ENCODE measurements at regions of chr9 and their contacts with region 1.

Region 1: DNA sequence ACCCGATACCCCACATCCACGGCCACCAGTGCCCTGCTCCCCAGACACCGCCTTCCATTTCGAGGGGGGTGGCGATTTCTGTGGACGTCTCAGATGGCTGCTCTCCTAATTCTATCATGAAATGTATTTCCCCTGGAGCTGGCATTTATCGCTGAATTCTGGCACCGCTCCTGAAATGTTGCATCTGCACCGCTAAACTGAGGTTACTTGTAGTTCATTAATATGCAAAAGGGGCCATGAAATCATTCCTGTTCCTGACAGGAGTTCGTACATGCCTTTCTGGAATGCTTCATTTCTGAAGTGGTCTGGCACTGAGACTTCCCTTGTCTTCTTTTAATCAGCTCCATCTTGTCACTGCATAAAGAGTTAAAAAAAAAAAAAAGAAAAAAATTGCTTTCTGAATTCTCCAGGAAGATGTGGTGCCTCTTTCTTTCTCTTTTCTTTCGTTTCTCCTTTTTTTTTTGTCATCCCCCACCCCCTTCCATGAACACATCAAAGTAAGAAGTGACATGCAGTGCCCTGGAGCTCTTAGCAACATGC is 97.7 kb upstream of the SMARCA2 start:
- DNase-seq: no peak
- ATAC-seq: no peak
- H3K4me3 ChIP-seq: no peak overlapping the region
- H3K4me3 Mint-ChIP-seq: no peak overlapping the region
- H3K27ac ChIP-seq: no peak overlapping the region
- H3K27ac Mint-ChIP-seq: no peak overlapping the region
- H3K4me1 ChIP-seq: no peaks in the 10 kb centered on the region
- H3K4me1 Mint-ChIP-seq: no peaks in the 10 kb centered on the region
- H3K27me3 ChIP-seq: peaks cover 2 to 13% of the 10 kb centered on the region in 2 experiments
- H3K27me3 Mint-ChIP-seq: peaks cover 24 to 26% of the 10 kb centered on the region in 2 donors

Region 2: DNA sequence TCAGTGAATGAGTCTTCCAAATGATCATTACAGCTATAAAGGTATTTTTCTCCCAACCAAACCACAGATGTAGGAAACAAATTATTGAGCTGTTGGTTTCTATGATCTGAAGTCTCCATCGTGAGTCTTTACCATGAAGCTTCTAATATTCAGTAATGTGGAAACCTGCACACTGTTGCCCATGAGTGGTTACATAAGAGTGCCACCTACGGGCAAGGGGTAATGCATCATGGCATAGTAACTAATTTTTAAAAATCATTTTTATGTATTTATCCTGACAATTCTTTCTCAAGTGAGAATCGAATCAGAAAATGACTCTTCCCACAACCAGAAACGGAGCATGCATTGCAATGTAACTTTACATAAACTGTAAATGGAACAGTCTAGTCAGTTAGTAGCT is 184.8 kb before region 1 on chr9:
- CTCF ChIA-PET with region 1: no interaction called
- POLR2A ChIA-PET with region 1: no interaction called
- DNase-seq: no peak
- ATAC-seq: no peak
- H3K4me3 ChIP-seq: no peak overlapping the region
- H3K4me3 Mint-ChIP-seq: no peak overlapping the region
- H3K27ac ChIP-seq: no peak overlapping the region
- H3K27ac Mint-ChIP-seq: no peak overlapping the region
- H3K4me1 ChIP-seq: no peaks in the 10 kb centered on the region
- H3K4me1 Mint-ChIP-seq: no peaks in the 10 kb centered on the region
- H3K27me3 ChIP-seq: peaks cover 0 to 1% of the 10 kb centered on the region in 2 experiments
- H3K27me3 Mint-ChIP-seq: peaks cover 3 to 8% of the 10 kb centered on the region in 2 donors

Region 3: DNA sequence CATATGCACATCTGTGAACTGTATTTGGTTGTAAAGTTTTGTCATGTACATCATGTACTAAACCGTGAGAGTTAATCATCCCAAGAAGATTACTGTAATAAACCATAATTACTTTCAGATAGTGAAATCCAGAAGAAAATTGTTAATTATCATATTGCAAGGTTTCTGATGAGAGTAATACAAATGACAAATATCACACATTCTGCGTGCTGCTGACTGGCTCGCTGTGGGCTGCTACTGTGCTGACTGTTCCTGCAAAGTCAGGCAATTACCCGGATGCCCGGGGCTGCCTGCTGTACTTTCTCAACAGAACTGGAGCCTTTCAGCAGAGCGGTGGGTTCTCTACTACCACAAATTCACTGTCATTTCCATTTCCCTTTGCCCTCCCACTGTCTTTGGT is 166.0 kb after region 1 on chr9:
- CTCF ChIA-PET with region 1: interaction called in 1 of 2 experiments, 3 read pairs
- POLR2A ChIA-PET with region 1: interaction called in 1 of 2 experiments, 13 read pairs
- DNase-seq: no peak
- ATAC-seq: no peak
- H3K4me3 ChIP-seq: no peak overlapping the region
- H3K4me3 Mint-ChIP-seq: no peak overlapping the region
- H3K27ac ChIP-seq: no peak overlapping the region
- H3K27ac Mint-ChIP-seq: peak overlapping the region; percentile 36 to 60
- H3K4me1 ChIP-seq: no peaks in the 10 kb centered on the region
- H3K4me1 Mint-ChIP-seq: peaks cover 5 to 9% (median 5%) of the 10 kb centered on the region in 3 donors
- H3K27me3 ChIP-seq: no peaks in the 10 kb centered on the region
- H3K27me3 Mint-ChIP-seq: no peaks in the 10 kb centered on the region

Measured in T-cell (primary cell).